ENCODE measurements at regions of chr20 and their contacts with region 1.

Region 1: DNA sequence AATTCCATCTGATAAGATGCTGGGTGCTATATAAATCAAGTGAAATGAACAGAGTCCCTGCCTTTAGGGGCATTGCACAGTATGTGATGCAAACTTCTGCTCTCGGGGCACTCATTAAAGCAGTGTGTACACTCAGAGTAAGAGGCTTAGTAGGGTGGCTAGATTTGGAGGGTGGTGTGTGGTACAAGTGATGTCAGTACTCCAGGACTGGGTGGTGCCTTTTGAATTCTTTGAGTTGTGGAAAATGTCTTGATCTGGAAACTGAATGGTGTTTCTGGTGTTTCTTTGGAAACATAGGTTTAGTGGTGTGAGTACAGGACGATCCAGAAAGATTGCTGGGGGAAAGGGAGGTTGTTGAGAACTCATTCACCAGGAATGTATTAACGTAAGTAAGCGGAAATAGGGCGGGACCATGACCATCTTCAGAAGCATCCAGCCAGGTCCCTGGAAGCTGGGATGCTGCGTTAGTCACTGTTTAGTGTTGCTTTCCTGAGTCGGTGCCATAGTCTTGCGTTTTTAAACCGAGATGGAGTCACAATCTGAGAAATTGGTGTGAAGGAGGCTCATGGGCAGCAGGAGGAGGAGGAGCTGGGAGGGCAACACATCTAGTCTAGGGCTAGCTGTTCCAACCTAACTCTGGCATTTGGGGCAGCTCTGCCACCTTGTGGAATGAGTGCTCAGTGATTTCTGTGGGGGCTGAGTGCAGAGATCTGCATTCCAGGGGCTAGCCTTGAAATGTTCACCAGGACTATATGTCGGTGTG is 70.3 kb downstream of the SCAND1 start:
- DNase-seq: peak; percentile 100
- H3K4me3 ChIP-seq: no peak overlapping the region
- H3K27ac ChIP-seq: peak overlapping the region; percentile 99
- H3K4me1 ChIP-seq: peaks cover 27% of the 10 kb centered on the region
- H3K27me3 ChIP-seq: no peaks in the 10 kb centered on the region
- CTCF ChIP-seq: peak; percentile 83 to 86

Region 2: GRCh38 chr20:35463455-35464300 is 420.3 kb before region 1 on chr20:
- CTCF ChIA-PET with region 1: no interaction called
- dilution Hi-C with region 1: no loop called
- in situ Hi-C with region 1: no loop called
- intact Hi-C with region 1: loop called (anchors 5 kb)
- DNase-seq: peak; percentile 29
- H3K4me3 ChIP-seq: no peak overlapping the region
- H3K27ac ChIP-seq: no peak overlapping the region
- H3K4me1 ChIP-seq: no peaks in the 10 kb centered on the region
- H3K27me3 ChIP-seq: no peaks in the 10 kb centered on the region
- CTCF ChIP-seq: peak; percentile 71 to 78

Region 3: DNA sequence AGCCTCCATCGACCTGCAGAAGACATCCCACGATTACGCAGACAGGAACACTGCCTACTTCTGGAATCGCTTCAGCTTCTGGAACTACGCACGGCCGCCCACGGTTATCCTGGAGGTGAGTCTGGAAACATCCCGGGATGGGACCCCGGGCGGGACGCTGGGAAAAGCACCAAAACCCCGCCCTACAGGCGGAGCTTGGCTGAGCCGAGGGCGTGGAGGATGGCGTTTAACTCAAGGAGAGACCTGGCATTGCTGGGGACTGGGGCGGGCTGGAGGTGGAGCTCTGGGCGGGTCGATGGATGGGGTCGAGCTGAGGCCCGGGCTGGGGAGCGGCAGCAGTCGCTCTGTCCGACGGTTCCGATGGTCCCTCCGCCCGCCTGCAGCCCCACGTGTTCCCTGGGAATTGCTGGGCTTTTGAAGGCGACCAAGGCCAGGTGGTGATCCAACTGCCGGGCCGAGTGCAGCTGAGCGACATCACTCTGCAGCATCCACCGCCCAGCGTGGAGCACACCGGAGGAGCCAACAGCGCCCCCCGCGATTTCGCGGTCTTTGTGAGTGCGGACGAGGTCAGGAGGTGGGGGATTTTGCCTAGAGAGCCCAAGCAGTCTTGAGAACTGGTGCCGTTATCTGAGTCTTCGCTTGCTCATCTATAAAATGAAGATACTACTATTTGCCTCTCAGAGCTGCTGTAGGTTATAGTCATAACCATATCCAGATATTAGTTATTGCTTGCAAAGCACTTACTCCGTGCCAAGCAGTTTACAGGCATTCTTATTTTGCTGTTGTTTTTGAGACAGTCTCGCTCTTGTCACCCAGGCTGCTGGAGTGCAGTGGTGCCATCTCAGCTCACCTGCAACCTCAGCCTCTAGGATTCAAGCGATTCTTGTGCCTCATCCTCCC is 264.5 kb before region 1 on chr20:
- CTCF ChIA-PET with region 1: no interaction called
- dilution Hi-C with region 1: no loop called
- in situ Hi-C with region 1: no loop called
- intact Hi-C with region 1: loop called (anchors 2 kb)
- DNase-seq: peak; percentile 78
- H3K4me3 ChIP-seq: peak overlapping the region; percentile 25 to 55 (median 51)
- H3K27ac ChIP-seq: no peak overlapping the region
- H3K4me1 ChIP-seq: peaks cover 33% of the 10 kb centered on the region
- H3K27me3 ChIP-seq: no peaks in the 10 kb centered on the region
- CTCF ChIP-seq: peak; percentile 33 to 46

Region 4: DNA sequence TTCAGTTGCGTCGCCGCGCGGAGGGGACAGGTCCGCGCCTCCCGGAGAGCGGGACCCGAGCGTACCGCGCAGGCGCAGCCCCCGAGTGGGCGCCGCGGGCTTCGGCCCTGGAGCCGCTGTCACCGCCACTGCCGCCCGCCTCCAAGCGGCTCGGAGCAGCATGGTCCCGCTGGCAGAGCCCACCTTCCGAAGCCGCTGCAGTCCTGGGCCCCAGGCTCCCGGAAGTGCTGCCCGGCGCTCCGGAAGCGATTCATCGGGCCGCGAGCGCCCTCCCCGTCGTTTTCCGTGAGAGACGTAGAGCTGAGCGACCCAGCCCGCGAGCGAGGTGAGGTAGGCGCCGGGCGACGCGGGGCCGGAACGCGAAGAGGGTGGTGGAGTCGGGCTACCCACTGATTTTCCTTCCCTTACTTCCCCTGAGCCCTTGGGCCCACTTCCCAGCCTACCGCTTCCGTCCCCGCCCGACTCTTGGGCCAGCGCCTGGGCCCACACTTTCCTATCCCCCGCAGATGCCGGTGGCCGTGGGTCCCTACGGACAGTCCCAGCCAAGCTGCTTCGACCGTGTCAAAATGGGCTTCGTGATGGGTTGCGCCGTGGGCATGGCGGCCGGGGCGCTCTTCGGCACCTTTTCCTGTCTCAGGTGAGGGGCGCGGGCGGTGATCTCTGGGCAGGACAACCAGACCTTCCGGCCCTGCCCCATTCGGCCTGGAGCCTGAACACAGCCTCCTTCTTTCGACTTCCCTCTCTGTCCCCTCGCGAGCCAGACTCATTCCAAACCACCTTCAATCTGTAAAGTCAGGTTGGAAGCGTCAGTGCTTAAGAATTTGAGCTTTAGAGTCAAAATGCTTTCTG is 184.6 kb before region 1 on chr20 and contains the starts of genes NFS1 and ROMO1:
- CTCF ChIA-PET with region 1: no interaction called
- dilution Hi-C with region 1: no loop called
- in situ Hi-C with region 1: no loop called
- intact Hi-C with region 1: loop called (anchors 5 kb)
- DNase-seq: peak; percentile 78
- H3K4me3 ChIP-seq: peak within 1 kb of the TSS; percentile 58 to 94 (median 81)
- H3K27ac ChIP-seq: peak within 1 kb of the TSS; percentile 78
- H3K4me1 ChIP-seq: peaks cover 17% of the 10 kb centered on the region
- H3K27me3 ChIP-seq: no peaks in the 10 kb centered on the region
- CTCF ChIP-seq: peak in 1 of 2 donors; percentile 29
- total RNA-seq, gene NFS1: 28.8 to 33.0 TPM
- total RNA-seq, gene ROMO1: 113 to 176 TPM

Region 5: GRCh38 chr20:35771689-35772562 is 112.0 kb before region 1 on chr20 and contains the start of gene PHF20:
- CTCF ChIA-PET with region 1: interaction called, 3 read pairs
- dilution Hi-C with region 1: loop called (anchors 5 kb)
- in situ Hi-C with region 1: no loop called
- intact Hi-C with region 1: loop called (anchors 1 kb)
- DNase-seq: peak; percentile 90
- H3K4me3 ChIP-seq: peak within 1 kb of the TSS; percentile 74 to 81 (median 79)
- H3K27ac ChIP-seq: peak within 1 kb of the TSS; percentile 86
- H3K4me1 ChIP-seq: peaks cover 29% of the 10 kb centered on the region
- H3K27me3 ChIP-seq: no peaks in the 10 kb centered on the region
- CTCF ChIP-seq: no peak
- total RNA-seq, gene PHF20: 24.0 to 39.7 TPM

Region 6: GRCh38 chr20:35849706-35850105 is 34.3 kb before region 1 on chr20:
- CTCF ChIA-PET with region 1: interaction called, 4 read pairs
- dilution Hi-C with region 1: no loop called
- in situ Hi-C with region 1: no loop called
- intact Hi-C with region 1: loop called (anchors 1 kb)
- DNase-seq: no peak
- H3K4me3 ChIP-seq: no peak overlapping the region
- H3K27ac ChIP-seq: no peak overlapping the region
- H3K4me1 ChIP-seq: no peaks in the 10 kb centered on the region
- H3K27me3 ChIP-seq: no peaks in the 10 kb centered on the region
- CTCF ChIP-seq: no peak